SK-N-SH (cell line): ENCODE measurements at regions of chr14 and their contacts with region 1.

Region 1: DNA sequence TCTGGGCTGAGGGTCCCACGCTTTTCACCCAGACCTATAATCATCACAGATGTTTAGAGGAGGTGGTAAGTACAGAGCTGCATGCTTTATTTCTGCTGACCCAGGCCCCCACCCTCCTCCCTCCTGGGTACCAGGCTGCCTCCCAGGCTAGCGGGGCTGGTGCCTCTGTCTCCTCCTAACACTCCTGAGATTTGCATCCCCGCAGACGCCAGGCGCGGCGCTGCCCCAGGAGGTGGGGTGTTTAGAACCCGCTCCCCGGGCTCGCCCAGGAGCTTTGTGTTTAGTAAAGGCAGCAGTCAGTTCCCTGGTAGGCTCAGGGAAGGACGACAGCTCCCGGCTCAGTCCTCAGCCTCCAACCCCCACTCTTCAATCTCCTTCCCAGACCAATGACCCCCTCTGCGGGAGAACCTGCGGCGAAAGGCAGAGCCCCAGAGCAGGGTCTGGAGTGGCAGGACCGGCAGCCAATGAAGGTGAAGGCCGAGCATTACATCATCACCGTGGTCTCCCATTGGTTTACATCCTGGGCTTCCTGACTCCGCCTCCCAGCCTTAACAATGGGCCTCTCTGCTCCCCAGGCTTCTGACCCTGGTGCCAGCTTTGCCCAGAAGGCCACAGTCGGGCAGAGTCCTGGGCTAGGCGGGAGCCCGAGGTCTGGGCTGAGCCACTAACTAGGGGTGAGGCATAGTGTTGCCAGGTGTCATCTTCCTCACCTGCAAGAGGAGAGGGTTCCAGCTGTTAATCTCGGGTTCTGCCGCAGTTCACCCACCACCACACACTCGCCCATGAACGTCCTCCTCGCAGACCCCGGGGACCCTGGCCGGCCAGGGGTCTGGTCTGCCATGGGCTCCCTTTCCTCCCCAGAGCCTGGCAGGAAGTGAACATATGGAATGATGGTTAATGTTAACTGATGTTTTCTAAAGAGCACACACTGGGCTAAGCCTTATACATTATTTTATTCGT is 57.5 kb downstream of the CALM1 start:
- DNase-seq: peak; percentile 95
- H3K4me3 ChIP-seq: peak overlapping the region; percentile 51 to 57; a peak in 3 of 4 replicates
- H3K27ac ChIP-seq: peak overlapping the region; percentile 24 to 98; a peak in 3 of 4 replicates
- H3K4me1 ChIP-seq: peaks cover 0 to 72% of the 10 kb centered on the region in 2 experiments; a peak in 2 of 4 replicates
- H3K27me3 ChIP-seq: no peaks in the 10 kb centered on the region
- CTCF ChIP-seq: no peak
- EP300 ChIP-seq: 0 out of 4 replicates have a peak, but pooled peaks of 1 of the 2 experiments have one; percentile 57
- RAD21 ChIP-seq: peak; percentile 37; the same call in 1 of the 2 replicates

Region 2: DNA sequence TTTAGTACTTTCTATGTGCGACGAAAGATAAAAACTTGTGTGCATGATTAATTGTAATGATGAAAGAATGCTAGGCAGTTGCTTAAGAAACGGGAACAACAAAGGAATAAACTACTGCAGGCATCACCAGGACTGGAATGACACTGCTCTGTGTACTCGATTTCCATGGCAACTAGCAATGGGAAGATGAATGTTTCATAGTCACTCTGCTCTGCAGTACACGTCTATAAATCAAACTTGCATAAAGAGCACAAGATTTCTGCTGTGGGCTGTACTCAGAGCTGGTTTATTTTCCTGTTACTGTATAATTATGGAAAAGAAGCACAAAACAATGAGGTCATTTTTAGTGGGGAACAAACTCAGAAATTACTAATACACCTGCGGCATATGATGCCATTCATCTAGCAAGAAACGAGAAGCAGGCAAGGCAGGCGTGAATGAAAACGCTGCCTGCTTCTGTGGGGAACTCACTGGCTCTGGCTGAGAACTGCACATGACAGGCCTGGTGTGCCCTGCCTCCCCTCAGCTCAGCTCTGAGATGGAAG is 541.6 kb before region 1 on chr14:
- CTCF ChIA-PET with region 1: no interaction called
- POLR2A ChIA-PET with region 1: no interaction called
- DNase-seq: peak; percentile 37
- H3K4me3 ChIP-seq: no peak overlapping the region
- H3K27ac ChIP-seq: peak overlapping the region in 1 of 2 experiments; percentile 90; a peak in 3 of 4 replicates
- H3K4me1 ChIP-seq: peaks cover 20 to 24% of the 10 kb centered on the region in 2 experiments
- H3K27me3 ChIP-seq: no peaks in the 10 kb centered on the region
- CTCF ChIP-seq: no peak
- EP300 ChIP-seq: peak in 1 of 2 experiments; percentile 24; a peak in 1 of 4 replicates
- RAD21 ChIP-seq: no peak

Region 3: DNA sequence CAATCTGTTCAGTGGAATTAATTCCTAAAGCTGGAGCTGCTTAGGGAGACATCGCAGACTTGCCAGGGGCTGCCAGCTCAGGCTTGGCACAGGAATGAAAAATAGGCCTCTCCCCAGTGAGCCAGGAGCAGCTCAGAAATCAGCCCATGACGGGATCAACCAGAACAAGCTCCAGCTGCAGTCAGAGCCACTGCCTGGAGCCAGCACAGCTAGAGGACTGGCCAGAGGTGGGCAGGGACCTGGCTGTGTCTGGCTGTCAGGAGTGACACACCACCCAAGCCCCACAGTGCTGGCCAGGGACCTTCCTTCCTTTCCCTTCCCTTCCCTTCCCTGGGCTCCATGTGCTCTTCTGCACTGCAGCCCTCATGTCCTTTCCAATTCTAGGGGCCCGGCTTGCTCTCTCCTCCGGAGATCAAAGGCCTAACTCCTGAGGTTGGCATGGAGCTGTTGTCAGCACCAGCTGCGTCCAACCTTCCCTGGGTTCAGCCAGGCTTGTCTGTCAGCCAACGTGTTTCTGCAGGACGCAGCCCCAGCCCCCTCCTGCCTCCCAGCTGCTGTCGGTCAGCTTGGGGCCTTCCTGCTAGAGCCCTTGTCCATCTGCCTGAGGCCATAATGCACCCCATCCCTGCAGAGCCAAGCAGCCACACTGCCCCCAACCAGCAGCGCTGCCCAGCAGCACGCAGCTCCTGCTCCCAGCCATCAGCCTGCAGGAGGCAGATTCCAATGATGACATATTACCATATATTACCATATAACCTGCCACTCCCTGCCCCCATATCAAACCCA is 91.8 kb after region 1 on chr14:
- CTCF ChIA-PET with region 1: interaction called, 5 read pairs
- POLR2A ChIA-PET with region 1: interaction called, 12 read pairs
- DNase-seq: peak; percentile 76
- H3K4me3 ChIP-seq: no peak overlapping the region
- H3K27ac ChIP-seq: peak overlapping the region in 1 of 2 experiments; percentile 94; a peak in 2 of 4 replicates
- H3K4me1 ChIP-seq: peaks cover 6 to 72% of the 10 kb centered on the region in 2 experiments
- H3K27me3 ChIP-seq: no peaks in the 10 kb centered on the region
- CTCF ChIP-seq: no peak
- EP300 ChIP-seq: peak in 1 of 2 experiments; percentile 38; a peak in 1 of 4 replicates
- RAD21 ChIP-seq: peak; percentile 34; the same call in 1 of the 2 replicates

Region 4: GRCh38 chr14:91167380-91167770 is 713.1 kb after region 1 on chr14:
- CTCF ChIA-PET with region 1: no interaction called
- POLR2A ChIA-PET with region 1: no interaction called
- DNase-seq: no peak
- H3K4me3 ChIP-seq: no peak overlapping the region
- H3K27ac ChIP-seq: peak overlapping the region in 1 of 2 experiments; percentile 24; a peak in 1 of 4 replicates
- H3K4me1 ChIP-seq: peaks cover 0 to 42% of the 10 kb centered on the region in 2 experiments; a peak in 1 of 4 replicates
- H3K27me3 ChIP-seq: no peaks in the 10 kb centered on the region
- CTCF ChIP-seq: no peak
- EP300 ChIP-seq: 0 out of 4 replicates have a peak, but pooled peaks of 1 of the 2 experiments have one; percentile 31
- RAD21 ChIP-seq: no peak